CD4-positive, alpha-beta T cell (primary cell): ENCODE measurements at regions of chr4 and their contacts with region 1.

Region 1: DNA sequence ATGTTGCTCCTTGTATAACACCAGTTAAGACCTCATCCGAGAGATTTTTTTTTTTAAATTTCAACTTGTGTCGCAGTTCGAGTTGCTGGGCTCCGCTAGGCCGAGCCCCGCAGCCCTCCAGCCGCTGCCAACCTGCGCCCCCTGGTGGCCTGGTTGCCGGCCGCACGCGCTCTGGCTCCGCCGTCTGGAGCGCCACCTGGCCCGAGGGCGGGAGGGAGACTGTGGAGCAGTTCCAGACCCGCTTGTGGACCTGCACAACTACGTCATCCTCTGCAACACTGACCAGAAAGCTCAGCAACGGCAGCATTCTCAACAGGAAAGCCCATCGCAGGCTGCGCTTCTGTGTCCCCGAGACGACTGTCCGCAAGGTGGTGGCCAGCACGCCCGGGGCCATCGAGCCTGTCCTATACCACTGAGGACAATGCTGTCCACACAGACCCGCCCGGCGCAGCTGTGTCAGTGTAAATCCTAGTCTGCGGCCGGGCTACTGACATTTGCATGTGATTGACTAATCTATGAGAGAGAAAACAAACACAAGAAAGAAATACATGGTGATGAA is 39.1 kb downstream of the ARL9 start:
- DNase-seq: peak; percentile 66 to 92 (median 85)
- ATAC-seq: peak; percentile 100
- H3K4me3 ChIP-seq: peak overlapping the region; percentile 41
- H3K4me3 Mint-ChIP-seq: peak overlapping the region; percentile 59
- H3K27ac ChIP-seq: no peak overlapping the region
- H3K27ac Mint-ChIP-seq: no peak overlapping the region
- H3K4me1 ChIP-seq: peaks cover 4% of the 10 kb centered on the region
- H3K4me1 Mint-ChIP-seq: peaks cover 21% of the 10 kb centered on the region
- H3K27me3 ChIP-seq: no peaks in the 10 kb centered on the region
- H3K27me3 Mint-ChIP-seq: peaks cover 9% of the 10 kb centered on the region
- CTCF ChIP-seq: peak; percentile 99

Region 2: DNA sequence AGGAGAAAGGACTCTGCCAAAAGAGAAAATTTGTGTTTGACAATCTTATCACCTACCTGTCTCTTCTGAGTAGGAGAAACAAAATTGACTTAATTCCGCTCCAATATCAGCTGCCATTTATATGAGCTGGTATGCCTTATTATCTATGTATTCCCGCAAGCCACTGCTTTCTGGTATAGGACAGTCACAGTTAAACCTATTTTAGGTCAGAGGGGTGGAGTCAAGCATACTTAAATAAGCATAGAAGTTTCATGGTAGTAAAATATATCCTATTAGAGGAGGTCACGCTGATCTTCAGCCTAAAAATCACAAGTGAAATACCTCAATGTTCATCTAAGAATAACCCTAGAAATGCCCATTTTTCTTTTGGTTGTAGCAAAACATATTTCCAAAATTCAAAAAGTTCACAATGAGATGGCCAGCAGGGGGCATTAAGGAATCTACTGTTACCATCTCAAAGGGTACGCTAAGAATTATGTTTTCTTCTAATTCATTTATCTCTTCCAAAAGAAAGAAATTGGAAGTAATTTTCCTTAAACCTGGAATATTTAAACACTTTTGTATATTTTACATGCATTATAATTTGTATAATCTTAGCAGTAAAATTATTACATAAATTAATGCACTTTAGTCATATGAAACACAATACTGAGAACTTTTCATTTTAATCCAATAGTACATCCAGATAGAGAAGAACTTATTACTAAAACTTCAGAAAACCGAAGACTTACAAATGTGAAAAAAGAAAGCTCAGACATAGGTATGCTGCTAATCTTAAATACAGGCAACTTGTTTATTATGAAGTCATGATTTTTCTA is 119.7 kb before region 1 on chr4:
- CTCF ChIA-PET with region 1: no interaction called
- POLR2A ChIA-PET with region 1: interaction called, 3 read pairs
- intact Hi-C with region 1: loop called (anchors 1 kb)
- DNase-seq: peak in 10 of 14 experiments; percentile 18 to 76 (median 31)
- ATAC-seq: peak; percentile 48
- H3K4me3 ChIP-seq: no peak overlapping the region
- H3K4me3 Mint-ChIP-seq: no peak overlapping the region
- H3K27ac ChIP-seq: no peak overlapping the region
- H3K27ac Mint-ChIP-seq: no peak overlapping the region
- H3K4me1 ChIP-seq: no peaks in the 10 kb centered on the region
- H3K4me1 Mint-ChIP-seq: peaks cover 9% of the 10 kb centered on the region
- H3K27me3 ChIP-seq: no peaks in the 10 kb centered on the region
- H3K27me3 Mint-ChIP-seq: no peaks in the 10 kb centered on the region
- CTCF ChIP-seq: peak; percentile 86

Region 3: DNA sequence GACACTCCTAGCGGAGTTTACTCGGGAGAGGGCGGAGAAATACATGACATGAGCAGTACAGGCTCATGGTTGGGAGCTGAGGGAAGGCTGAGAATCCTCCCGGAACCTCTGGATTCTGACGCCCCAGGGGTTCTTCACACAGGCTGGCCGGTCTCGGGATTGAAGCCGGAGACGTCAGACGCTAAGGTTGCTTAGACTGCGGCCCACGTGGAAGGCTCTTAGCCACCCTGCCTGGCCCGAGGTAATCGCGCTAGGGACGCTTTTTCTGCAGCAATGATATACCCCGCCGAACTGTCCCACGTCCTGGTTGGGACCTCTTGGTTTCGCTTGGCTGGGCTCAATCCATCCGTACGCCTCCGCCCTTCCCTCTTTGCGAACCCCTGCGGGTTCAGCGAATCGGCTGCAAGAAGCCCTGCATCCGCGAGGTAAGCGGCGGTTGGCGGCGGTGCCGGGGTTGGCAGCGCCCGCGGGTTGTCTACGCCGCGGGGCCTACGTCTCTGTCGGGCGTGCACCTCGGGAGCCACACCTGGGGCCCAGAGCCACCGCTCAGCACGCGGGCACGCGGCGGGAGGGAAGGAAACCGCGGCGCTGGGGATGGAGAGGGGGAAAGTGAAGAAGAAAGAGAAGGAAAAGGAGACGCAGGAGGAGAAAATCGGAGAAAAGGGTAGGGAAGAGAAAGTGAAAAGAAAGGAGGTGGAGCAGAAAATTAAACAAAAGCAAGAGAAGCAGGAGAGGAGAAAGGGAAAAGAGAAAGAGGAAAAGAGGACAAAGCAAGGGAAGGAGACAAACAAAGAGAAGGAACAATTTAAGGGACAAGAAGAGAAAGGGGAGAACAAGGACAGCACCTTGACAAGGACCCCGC is 39.2 kb before region 1 on chr4 and contains the start of gene ARL9:
- CTCF ChIA-PET with region 1: no interaction called
- POLR2A ChIA-PET with region 1: no interaction called
- intact Hi-C with region 1: loop called (anchors 5 kb)
- DNase-seq: peak; percentile 48 to 84 (median 67)
- ATAC-seq: peak; percentile 98
- H3K4me3 ChIP-seq: peak within 1 kb of the TSS; percentile 57
- H3K4me3 Mint-ChIP-seq: peak within 1 kb of the TSS; percentile 86
- H3K27ac ChIP-seq: no peak within 1 kb of the TSS
- H3K27ac Mint-ChIP-seq: peak within 1 kb of the TSS; percentile 67
- H3K4me1 ChIP-seq: peaks cover 17% of the 10 kb centered on the region
- H3K4me1 Mint-ChIP-seq: peaks cover 15% of the 10 kb centered on the region
- H3K27me3 ChIP-seq: peaks cover 0 to 4% of the 10 kb centered on the region in 2 experiments
- H3K27me3 Mint-ChIP-seq: no peaks in the 10 kb centered on the region
- CTCF ChIP-seq: no peak
- total RNA-seq, gene ARL9: 0.17 TPM in 1 of 2 experiments, not detected in the other

Region 4: GRCh38 chr4:56757821-56758411 is 213.3 kb after region 1 on chr4:
- CTCF ChIA-PET with region 1: no interaction called
- POLR2A ChIA-PET with region 1: no interaction called
- intact Hi-C with region 1: no loop called
- DNase-seq: peak; percentile 35 to 85 (median 58)
- ATAC-seq: peak; percentile 81
- H3K4me3 ChIP-seq: peak overlapping the region; percentile 36
- H3K4me3 Mint-ChIP-seq: peak overlapping the region; percentile 83
- H3K27ac ChIP-seq: peak overlapping the region; percentile 71 to 75
- H3K27ac Mint-ChIP-seq: peak overlapping the region; percentile 89
- H3K4me1 ChIP-seq: peaks cover 44% of the 10 kb centered on the region
- H3K4me1 Mint-ChIP-seq: peaks cover 62% of the 10 kb centered on the region
- H3K27me3 ChIP-seq: no peaks in the 10 kb centered on the region
- H3K27me3 Mint-ChIP-seq: no peaks in the 10 kb centered on the region
- CTCF ChIP-seq: no peak